Heart left ventricle (tissue), 16 donors: ENCODE measurements at regions of chr1 and their contacts with region 1.

Region 1: DNA sequence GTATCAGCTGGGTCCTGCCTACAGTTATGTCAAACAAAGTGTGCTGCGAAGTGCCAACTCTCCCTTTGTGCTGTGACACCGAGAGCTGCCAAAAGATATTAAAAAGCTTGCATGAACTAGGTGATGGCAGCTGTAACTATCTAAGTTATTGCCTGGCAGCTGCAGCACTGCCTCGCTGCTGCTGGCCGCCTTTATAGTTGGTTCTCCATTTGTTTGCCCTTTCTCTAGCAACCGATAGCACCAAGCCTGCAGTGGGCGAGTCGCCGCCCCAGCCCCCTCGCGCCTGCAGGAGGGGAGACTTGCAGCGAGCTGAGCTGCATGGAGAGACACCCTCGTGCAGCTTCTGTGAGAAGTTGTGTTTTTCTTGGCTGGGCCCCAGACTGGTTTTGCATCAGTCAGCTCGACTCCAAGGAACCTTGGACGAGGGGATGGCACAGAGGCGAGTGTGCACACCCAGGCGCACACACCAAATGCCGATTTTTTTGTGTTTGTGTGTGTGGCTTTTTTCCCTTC is 330.6 kb downstream of the RPS6KC1 start:
- DNase-seq: peak in 4 of 5 donors; percentile 37 to 68 (median 50)
- ATAC-seq: peak; percentile 90 to 97 (median 95)
- H3K4me3 ChIP-seq: peak overlapping the region in 6 of 12 donors; percentile 7 to 36 (median 12)
- H3K27ac ChIP-seq: peak overlapping the region in 1 of 12 donors; percentile 3
- H3K4me1 ChIP-seq: peaks cover 0 to 10% (median 0%) of the 10 kb centered on the region in 12 donors
- H3K27me3 ChIP-seq: no peaks in the 10 kb centered on the region
- CTCF ChIP-seq: no peak
- POLR2A ChIP-seq: no peak

Region 2: DNA sequence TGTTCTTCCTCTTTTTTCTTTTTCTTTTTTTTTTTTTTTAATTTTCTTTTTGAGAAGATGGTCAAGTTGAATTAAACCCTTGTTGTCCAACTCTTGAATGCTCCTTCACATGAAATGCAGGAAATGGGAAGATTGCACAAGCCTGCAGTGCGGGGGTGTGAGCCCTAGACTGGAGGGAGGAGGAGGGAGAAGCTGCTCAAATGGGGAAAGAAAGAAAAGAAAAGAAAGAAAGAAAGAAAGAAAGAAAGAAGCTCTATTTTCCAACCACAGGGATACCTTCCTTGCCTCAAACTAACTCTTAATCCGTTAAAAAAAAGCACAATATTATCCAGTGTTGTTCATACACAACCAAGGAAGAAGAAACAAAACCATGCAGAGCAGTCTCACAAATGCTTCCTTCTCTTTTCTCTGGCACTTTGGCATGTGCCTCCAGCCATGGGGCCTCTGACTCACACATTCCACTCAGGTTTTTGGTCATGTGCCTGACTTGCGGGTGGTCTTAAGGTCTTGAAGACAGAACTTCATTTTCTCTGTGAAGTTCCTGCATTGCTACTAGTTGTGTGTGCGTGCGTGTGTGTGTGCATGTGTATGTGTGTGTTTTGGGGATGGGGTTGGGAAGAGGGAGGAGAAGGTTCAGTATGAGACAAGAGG is 54.5 kb before region 1 on chr1:
- intact Hi-C with region 1: no loop called
- DNase-seq: peak in 4 of 5 donors; percentile 24 to 58 (median 38)
- ATAC-seq: peak in 3 of 4 donors; percentile 62 to 74 (median 62)
- H3K4me3 ChIP-seq: no peak overlapping the region
- H3K27ac ChIP-seq: peak overlapping the region in 2 of 12 donors; percentile 13 to 75
- H3K4me1 ChIP-seq: peaks cover 0 to 24% (median 0%) of the 10 kb centered on the region in 12 donors
- H3K27me3 ChIP-seq: no peaks in the 10 kb centered on the region
- CTCF ChIP-seq: no peak
- POLR2A ChIP-seq: no peak

Region 3: GRCh38 chr1:213443415-213443814 is 61.8 kb after region 1 on chr1:
- intact Hi-C with region 1: no loop called
- DNase-seq: no peak
- ATAC-seq: no peak
- H3K4me3 ChIP-seq: no peak overlapping the region
- H3K27ac ChIP-seq: no peak overlapping the region
- H3K4me1 ChIP-seq: no peaks in the 10 kb centered on the region
- H3K27me3 ChIP-seq: peaks cover 0 to 6% (median 0%) of the 10 kb centered on the region in 9 donors
- CTCF ChIP-seq: no peak
- POLR2A ChIP-seq: no peak

Region 4: GRCh38 chr1:213474054-213474453 is 92.4 kb after region 1 on chr1:
- intact Hi-C with region 1: loop called in 1 of 10 experiments (anchors 10 kb)
- DNase-seq: peak; percentile 70 to 86 (median 77)
- ATAC-seq: peak; percentile 89 to 98 (median 96)
- H3K4me3 ChIP-seq: no peak overlapping the region
- H3K27ac ChIP-seq: peak overlapping the region in 6 of 12 donors; percentile 23 to 65 (median 49)
- H3K4me1 ChIP-seq: peaks cover 0 to 11% (median 0%) of the 10 kb centered on the region in 12 donors
- H3K27me3 ChIP-seq: no peaks in the 10 kb centered on the region
- CTCF ChIP-seq: peak in 2 of 12 donors; percentile 18 to 20
- POLR2A ChIP-seq: no peak

Region 5: GRCh38 chr1:213523781-213524398 is 142.3 kb after region 1 on chr1:
- intact Hi-C with region 1: loop called in 1 of 10 experiments (anchors 10 kb)
- DNase-seq: peak in 4 of 5 donors; percentile 25 to 53 (median 46)
- ATAC-seq: peak; percentile 42 to 80 (median 68)
- H3K4me3 ChIP-seq: no peak overlapping the region
- H3K27ac ChIP-seq: no peak overlapping the region
- H3K4me1 ChIP-seq: no peaks in the 10 kb centered on the region
- H3K27me3 ChIP-seq: no peaks in the 10 kb centered on the region
- CTCF ChIP-seq: no peak
- POLR2A ChIP-seq: no peak

Region 6: DNA sequence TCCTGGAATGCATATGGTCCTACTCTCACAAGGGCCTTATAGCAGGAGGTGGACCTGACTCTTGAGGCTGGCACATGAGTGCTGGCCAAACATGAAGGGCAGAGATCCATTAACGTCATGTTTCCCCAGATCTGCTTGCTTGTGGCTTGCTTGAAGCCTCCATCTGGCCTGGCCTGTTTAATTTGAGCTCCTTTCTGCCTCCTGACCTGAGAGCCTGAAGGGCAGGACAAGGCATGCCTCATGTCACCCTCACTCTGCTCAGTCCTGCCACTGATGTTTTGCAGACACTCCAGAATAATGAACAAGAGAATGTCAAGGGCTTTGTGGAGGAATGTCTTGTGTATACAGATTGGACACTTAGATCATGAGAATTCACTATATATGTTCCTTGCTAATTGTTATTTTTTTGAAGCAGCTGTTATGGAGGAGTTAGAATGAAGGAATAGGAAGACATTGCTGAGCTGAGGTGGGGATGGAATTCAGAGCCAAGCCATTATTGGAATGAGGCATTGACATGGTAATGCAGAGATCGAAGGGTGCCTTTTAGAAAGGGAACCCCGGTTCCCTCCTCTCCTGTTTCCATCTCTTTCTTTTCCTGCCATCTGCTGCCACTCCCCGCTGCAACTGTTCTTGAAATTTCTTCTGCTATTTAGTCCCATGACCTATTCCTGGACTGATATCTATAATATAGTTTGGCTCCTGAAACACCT is 149.1 kb after region 1 on chr1:
- intact Hi-C with region 1: loop called in 2 of 10 experiments (anchors 10 kb)
- DNase-seq: peak in 2 of 5 donors; percentile 14 to 35
- ATAC-seq: peak in 3 of 4 donors; percentile 82 to 95 (median 83)
- H3K4me3 ChIP-seq: no peak overlapping the region
- H3K27ac ChIP-seq: no peak overlapping the region
- H3K4me1 ChIP-seq: peaks cover 0 to 6% (median 0%) of the 10 kb centered on the region in 12 donors
- H3K27me3 ChIP-seq: no peaks in the 10 kb centered on the region
- CTCF ChIP-seq: no peak
- POLR2A ChIP-seq: no peak

Region 7: GRCh38 chr1:213564215-213564659 is 182.6 kb after region 1 on chr1:
- intact Hi-C with region 1: loop called in 3 of 10 experiments (anchors 5 to 10 kb)
- DNase-seq: no peak
- ATAC-seq: peak in 1 of 4 donors; percentile 49
- H3K4me3 ChIP-seq: no peak overlapping the region
- H3K27ac ChIP-seq: no peak overlapping the region
- H3K4me1 ChIP-seq: no peaks in the 10 kb centered on the region
- H3K27me3 ChIP-seq: no peaks in the 10 kb centered on the region
- CTCF ChIP-seq: peak; percentile 13 to 50 (median 34)
- POLR2A ChIP-seq: no peak